GM10248 (cell line): ENCODE measurements at regions of chrX and their contacts with region 1.

Region 1: GRCh38 chrX:37745354-37745753 is 34.5 kb upstream of the CYBB start:
- DNase-seq: peak; percentile 42
- CTCF ChIP-seq: peak; percentile 59

Region 2: DNA sequence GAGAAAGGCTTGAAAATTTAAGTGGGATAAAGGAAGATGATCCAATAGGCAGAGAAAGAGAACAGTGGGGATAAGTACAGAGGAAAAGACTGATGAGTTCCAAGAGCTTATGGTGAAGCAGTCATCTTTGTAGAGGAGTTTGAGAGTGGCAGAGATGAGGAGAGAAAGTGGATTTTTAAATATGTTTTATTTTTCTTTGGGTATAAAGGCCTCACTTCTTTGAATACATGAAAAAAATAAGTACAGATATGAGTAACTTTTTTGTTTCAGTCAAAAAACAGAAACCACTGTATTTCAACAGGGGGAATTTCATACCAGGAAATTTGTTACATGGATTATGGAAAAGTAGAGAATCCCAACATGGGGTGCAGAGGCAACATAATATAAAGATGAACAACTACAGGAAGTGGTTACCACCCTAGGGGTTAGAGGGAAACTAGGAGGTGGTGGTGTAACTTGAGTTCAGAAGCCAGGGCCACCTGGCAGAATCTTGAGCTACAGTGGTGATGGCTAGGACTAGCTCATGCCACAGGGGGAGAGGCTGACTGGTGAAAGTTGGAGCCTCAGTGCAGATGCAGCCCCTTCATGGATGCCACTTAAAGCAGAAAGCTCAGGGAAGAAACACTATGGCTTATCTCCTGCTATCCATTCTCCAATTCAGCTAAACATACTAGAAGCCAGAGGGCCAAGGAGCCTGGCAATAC is 31.1 kb after region 1 on chrX:
- CTCF ChIA-PET with region 1: interaction called, 25 read pairs
- POLR2A ChIA-PET with region 1: no interaction called
- DNase-seq: no peak
- CTCF ChIP-seq: no peak

Region 3: DNA sequence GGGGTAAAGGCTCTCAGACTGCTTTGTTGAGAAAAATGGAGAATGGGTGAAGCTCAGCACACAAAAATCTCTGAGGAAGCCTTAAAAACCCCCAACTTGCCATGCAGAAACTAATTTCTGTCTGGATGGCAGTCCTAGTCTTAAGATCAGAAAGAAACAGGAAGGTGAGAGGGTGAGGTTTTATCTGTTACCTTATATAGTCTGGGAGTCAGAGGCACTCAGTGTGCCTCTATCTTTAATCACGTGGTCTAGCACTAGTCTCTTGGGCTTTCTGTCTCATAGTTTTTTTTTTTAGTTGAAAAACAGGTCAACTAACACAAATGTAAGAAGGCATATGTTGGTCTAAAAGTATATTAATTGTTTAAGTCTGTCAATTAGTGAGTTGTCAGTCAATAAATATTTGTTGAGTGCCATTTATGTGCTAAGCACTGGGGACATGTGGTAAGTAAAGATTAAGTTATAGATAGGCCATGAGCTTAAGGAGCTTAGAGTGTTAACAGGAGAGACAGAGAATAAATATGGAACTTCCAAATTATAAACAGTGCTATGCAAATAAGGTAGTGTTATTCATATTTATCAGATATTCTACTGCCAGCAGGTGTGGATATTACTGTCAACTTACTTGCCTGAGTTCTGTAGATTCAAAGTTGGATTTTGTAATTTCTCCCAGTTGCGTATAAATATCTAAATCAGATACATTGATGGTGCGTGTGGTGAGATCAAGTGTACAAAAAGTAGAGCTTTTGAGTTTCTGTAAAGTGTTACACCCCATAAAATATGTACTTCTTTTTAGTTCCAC is 41.5 kb after region 1 on chrX:
- CTCF ChIA-PET with region 1: interaction called, 25 read pairs
- POLR2A ChIA-PET with region 1: no interaction called
- DNase-seq: no peak
- CTCF ChIP-seq: no peak

Region 4: DNA sequence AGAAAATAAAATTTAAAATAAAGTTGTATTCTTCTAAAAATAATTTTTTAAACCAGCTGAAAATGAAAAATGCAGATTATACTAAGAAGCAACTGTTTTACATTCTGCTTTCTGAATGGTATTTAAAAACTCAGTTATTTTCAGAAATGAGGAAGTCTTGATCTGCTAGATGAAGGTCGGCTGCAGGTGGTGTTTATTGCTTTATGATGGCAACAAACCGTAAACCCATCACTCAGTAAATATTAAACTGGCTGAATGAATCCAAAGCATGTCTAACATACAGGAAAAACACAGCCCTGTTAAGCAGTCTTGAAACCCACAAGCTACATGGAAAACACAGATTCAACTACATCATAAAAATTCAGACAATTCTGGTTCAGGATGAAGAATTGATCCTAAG is 72.7 kb after region 1 on chrX:
- CTCF ChIA-PET with region 1: interaction called, 146 read pairs
- POLR2A ChIA-PET with region 1: no interaction called
- DNase-seq: peak; percentile 22
- CTCF ChIP-seq: no peak

Region 5: GRCh38 chrX:37825209-37825842 is 80.0 kb after region 1 on chrX:
- CTCF ChIA-PET with region 1: interaction called, 146 read pairs
- POLR2A ChIA-PET with region 1: no interaction called
- DNase-seq: peak; percentile 17
- CTCF ChIP-seq: peak; percentile 78

Region 6: DNA sequence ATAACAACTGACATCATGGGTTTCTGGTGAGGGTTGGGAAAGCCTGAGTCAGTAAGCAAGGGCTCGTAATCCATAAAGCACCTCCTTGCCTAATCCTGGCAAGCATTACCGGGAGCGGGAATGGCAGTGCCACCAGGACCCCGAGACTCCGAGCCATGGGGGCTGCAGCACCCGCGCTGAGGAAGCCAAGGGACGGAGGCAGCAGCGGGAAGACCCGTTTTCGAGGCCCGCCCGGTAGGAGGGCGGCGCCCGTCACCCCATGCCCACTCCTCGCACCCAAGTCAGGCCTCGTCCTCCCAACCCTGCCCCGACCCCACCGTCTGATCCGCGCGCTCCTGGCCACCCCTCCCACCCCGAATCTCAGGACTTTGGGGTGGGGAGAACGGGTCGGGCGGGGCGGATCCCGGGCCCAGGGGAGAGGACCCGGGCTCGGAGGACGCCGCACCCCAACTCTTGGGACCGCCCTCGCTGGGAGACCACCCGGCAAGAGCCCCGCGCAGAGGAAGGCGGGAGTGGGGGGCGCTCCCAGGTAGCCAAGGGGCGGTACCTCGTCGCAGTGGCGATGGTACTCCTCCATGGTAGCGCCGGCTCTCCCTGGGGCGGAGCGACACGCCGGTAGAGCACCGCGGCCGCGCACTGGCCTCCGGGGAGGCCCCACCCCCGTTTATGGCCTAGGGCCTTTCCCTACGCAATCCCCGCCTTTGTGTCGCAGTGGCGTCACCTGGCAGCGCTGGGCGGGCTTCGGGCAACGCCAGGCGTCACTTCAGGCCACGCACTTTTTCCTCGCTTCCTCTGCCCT is 101.8 kb after region 1 on chrX and contains the start of gene DYNLT3:
- CTCF ChIA-PET with region 1: interaction called, 10 read pairs
- POLR2A ChIA-PET with region 1: no interaction called
- DNase-seq: peak; percentile 81
- CTCF ChIP-seq: no peak

Region 7: DNA sequence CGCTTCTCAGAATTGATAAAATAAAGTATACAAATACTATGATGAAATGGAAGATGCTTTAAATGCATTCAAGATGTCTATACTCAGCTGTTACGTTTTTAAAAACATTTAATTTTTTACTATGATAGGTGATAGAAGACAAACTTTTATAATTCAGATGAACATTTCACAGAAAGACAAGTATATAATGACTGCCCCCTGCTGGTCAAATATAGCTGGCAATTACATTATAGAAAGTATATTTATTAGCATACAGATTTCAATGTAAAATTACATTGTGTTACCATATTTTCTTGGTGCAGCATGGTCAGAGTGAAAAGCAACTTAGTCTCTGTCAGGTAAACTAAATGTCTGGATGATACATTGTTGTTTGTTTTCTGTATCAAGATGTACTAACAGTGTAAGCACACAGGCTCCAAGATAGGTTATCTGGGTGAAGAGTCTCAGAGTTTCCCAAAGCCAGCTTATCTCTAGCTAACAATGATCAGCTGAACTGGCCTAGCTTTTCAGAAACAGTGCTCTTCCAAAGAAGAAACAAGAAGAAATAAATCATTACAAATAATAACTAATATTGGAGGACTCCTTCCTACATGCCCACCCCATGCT is 421.2 kb after region 1 on chrX:
- CTCF ChIA-PET with region 1: interaction called, 14 read pairs
- POLR2A ChIA-PET with region 1: no interaction called
- DNase-seq: peak; percentile 21
- CTCF ChIP-seq: peak; percentile 5